Activated naive CD8-positive, alpha-beta T cell treated with anti-CD3 and anti-CD28 coated beads, Interleukin-2, amount 10 ng/mL, durations not matched to agents 7 days and 5 days (primary cell): ENCODE measurements at regions of chr10 and their contacts with region 1.

Region 1: GRCh38 chr10:7818295-7819122 is at the start of gene TAF3:
- DNase-seq: peak; percentile 95
- ATAC-seq: peak; percentile 81
- H3K4me3 Mint-ChIP-seq: peak within 1 kb of the TSS; percentile 92
- H3K27ac Mint-ChIP-seq: peak within 1 kb of the TSS; percentile 84
- H3K4me1 Mint-ChIP-seq: peaks cover 16% of the 10 kb centered on the region
- H3K27me3 Mint-ChIP-seq: peaks cover 5% of the 10 kb centered on the region
- total RNA-seq, gene TAF3: 16.2 to 16.8 TPM

Region 2: GRCh38 chr10:7787857-7788638 is 30.5 kb before region 1 on chr10 and contains the starts of genes ATP5F1C and KIN:
- POLR2A ChIA-PET with region 1: interaction called, 43 read pairs
- DNase-seq: peak; percentile 98
- ATAC-seq: peak; percentile 96
- H3K4me3 Mint-ChIP-seq: no peak within 1 kb of the TSS
- H3K27ac Mint-ChIP-seq: no peak within 1 kb of the TSS
- H3K4me1 Mint-ChIP-seq: peaks cover 46% of the 10 kb centered on the region
- H3K27me3 Mint-ChIP-seq: no peaks in the 10 kb centered on the region
- total RNA-seq, gene ATP5F1C: 268 to 273 TPM
- total RNA-seq, gene KIN: 13.8 to 16.6 TPM

Region 3: DNA sequence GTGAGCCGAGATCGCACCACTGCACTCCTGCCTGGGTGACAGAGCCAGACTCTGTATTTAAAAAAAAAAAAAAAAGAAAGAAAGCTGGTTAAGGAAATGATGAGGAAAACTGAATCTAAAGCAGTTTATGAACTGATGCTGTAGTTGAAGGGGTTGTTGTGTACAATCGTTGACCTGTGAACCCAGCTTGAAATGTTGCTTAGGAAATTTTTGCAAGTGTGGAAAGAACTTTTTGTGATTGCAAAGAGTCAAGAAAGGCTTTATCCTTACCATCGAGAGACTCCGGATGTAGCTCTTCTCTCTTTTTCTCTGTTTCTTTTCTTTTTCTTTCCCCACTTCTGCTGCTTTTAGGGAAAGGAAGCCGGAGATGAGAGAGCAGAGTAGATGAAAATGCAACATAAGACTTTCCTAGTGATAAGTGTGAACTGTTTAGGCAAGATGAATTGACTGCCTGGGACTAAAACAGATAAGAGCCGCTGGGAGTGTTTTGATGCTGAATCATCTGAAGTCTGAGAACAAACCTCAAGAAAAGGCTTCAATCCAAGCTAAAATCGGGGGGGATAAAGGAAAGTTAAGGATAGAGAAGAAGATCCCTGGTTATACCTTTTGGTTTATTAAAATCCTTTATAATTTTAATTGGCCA is 68.8 kb after region 1 on chr10:
- POLR2A ChIA-PET with region 1: no interaction called
- DNase-seq: no peak
- ATAC-seq: no peak
- H3K4me3 Mint-ChIP-seq: no peak overlapping the region
- H3K27ac Mint-ChIP-seq: no peak overlapping the region
- H3K4me1 Mint-ChIP-seq: peaks cover 5% of the 10 kb centered on the region
- H3K27me3 Mint-ChIP-seq: no peaks in the 10 kb centered on the region